Mammary epithelial cell (primary cell): ENCODE measurements at regions of chr1 and their contacts with region 1.

Region 1: DNA sequence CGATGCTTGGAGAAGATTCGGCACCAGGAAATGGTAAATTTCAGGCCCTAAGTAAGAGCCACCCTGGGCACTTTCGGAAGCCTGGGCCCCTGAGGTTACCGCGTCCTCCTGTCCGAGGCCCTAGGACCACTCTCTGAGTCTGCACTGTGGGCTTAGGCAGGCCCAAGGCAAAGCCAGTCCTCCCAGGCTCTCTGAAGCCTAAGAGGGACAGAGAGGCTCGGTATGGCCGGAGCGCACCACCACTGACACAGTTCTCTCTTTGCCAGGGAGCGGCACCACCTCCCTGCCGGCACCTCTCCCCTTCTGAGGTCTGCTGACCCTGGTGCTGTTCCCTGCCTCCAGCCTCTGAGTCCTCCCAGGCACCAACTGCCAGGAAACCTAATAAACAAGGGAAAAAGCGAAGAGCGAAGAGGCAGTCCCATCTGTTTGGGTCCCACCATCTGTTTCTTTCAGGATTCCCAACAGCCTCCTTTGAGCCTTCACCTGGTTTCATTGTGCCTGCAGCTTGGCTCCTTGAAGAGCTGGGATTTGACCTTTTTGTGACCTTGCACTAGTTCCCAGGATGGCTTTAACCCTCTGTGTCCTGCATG is 57.7 kb downstream of the VWA5B1 start:
- DNase-seq: no peak
- H3K4me3 ChIP-seq: no peak overlapping the region
- H3K27ac ChIP-seq: no peak overlapping the region
- H3K4me1 ChIP-seq: no peaks in the 10 kb centered on the region
- H3K27me3 ChIP-seq: no peaks in the 10 kb centered on the region
- CTCF ChIP-seq: no peak

Region 2: GRCh38 chr1:20255666-20256065 is 92.8 kb before region 1 on chr1:
- CTCF ChIA-PET with region 1: no interaction called
- dilution Hi-C with region 1: loop called (anchors 5 kb)
- in situ Hi-C with region 1: no loop called
- intact Hi-C with region 1: no loop called
- DNase-seq: peak; percentile 36
- H3K4me3 ChIP-seq: no peak overlapping the region
- H3K27ac ChIP-seq: no peak overlapping the region
- H3K4me1 ChIP-seq: no peaks in the 10 kb centered on the region
- H3K27me3 ChIP-seq: no peaks in the 10 kb centered on the region
- CTCF ChIP-seq: no peak

Region 3: GRCh38 chr1:20308569-20308968 is 39.9 kb before region 1 on chr1:
- CTCF ChIA-PET with region 1: no interaction called
- dilution Hi-C with region 1: loop called (anchors 5 kb)
- in situ Hi-C with region 1: no loop called
- intact Hi-C with region 1: no loop called
- DNase-seq: no peak
- H3K4me3 ChIP-seq: no peak overlapping the region
- H3K27ac ChIP-seq: no peak overlapping the region
- H3K4me1 ChIP-seq: no peaks in the 10 kb centered on the region
- H3K27me3 ChIP-seq: peaks cover 7% of the 10 kb centered on the region
- CTCF ChIP-seq: no peak